ENCODE measurements at regions of chr1 and their contacts with region 1.

Region 1: GRCh38 chr1:156583821-156584622 is 4.5 kb downstream of the TTC24 start:
- DNase-seq: peak; percentile 82
- H3K4me3 ChIP-seq: no peak overlapping the region
- H3K27ac ChIP-seq: no peak overlapping the region
- H3K4me1 ChIP-seq: no peaks in the 10 kb centered on the region
- H3K27me3 ChIP-seq: no peaks in the 10 kb centered on the region
- CTCF ChIP-seq: peak; percentile 68 to 90
- POLR2A ChIP-seq: no peak

Region 2: GRCh38 chr1:156601122-156601830 is 17.3 kb after region 1 on chr1 and contains the start of gene GPATCH4:
- CTCF ChIA-PET with region 1: interaction called, 11 read pairs
- POLR2A ChIA-PET with region 1: no interaction called
- dilution Hi-C with region 1: no loop called
- intact Hi-C with region 1: loop called (anchors 2 kb)
- DNase-seq: peak; percentile 90
- H3K4me3 ChIP-seq: peak within 1 kb of the TSS; percentile 50 to 87 (median 58)
- H3K27ac ChIP-seq: peak within 1 kb of the TSS; percentile 60
- H3K4me1 ChIP-seq: peaks cover 10% of the 10 kb centered on the region
- H3K27me3 ChIP-seq: no peaks in the 10 kb centered on the region
- CTCF ChIP-seq: no peak
- POLR2A ChIP-seq: peak; percentile 90
- total RNA-seq, gene GPATCH4: 29.2 and 32.0 TPM in 2 replicates

Measured in endothelial cell of umbilical vein (primary cell).